CD8-positive, alpha-beta memory T cell (primary cell): ENCODE measurements at regions of chr19 and their contacts with region 1.

Region 1: DNA sequence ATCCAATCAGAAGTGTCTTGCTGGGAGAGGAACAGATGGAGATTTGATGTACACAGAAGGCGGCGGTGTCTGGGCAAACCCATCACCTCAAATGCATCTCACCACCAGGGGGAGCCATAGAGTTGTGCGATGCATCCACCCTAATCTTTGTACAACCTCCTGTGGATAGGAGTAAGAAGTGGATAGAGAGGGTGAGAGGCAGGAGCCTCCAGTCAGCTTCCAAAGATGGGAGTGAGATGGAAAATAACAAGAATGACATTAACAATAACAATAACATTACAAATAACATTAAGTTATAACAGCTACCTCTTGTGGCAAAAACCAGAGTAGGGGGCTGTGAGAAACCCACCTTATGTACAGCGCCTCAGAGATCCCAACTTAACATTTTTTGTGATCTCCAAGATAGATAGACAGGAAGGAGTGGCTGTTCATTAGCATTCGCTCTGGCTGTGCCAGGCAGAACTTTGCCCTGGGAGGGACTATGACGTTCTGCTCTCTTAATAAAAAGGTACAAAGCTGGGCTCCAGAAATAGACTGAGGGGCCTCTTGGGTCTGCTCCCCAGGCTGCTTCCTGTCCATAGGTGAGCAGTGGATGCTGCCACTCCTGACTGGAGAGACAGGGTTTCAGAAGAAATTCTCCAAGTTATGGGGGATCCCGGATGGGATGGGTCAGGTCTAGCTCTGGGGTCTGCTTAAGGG is 5.2 kb upstream of the CEACAM18 start:
- DNase-seq: peak; percentile 44 to 82 (median 67)
- H3K4me3 ChIP-seq: no peak overlapping the region
- H3K4me3 Mint-ChIP-seq: no peak overlapping the region
- H3K27ac ChIP-seq: no peak overlapping the region
- H3K27ac Mint-ChIP-seq: no peak overlapping the region
- H3K4me1 ChIP-seq: no peaks in the 10 kb centered on the region
- H3K4me1 Mint-ChIP-seq: no peaks in the 10 kb centered on the region
- H3K27me3 ChIP-seq: no peaks in the 10 kb centered on the region
- H3K27me3 Mint-ChIP-seq: peaks cover 11 to 41% of the 10 kb centered on the region in 2 donors

Region 2: GRCh38 chr19:51434456-51434855 is 38.7 kb before region 1 on chr19:
- CTCF ChIA-PET with region 1: interaction called, 12 read pairs
- POLR2A ChIA-PET with region 1: no interaction called
- DNase-seq: no peak
- H3K4me3 ChIP-seq: no peak overlapping the region
- H3K4me3 Mint-ChIP-seq: no peak overlapping the region
- H3K27ac ChIP-seq: no peak overlapping the region
- H3K27ac Mint-ChIP-seq: no peak overlapping the region
- H3K4me1 ChIP-seq: no peaks in the 10 kb centered on the region
- H3K4me1 Mint-ChIP-seq: peaks cover 0 to 12% (median 3%) of the 10 kb centered on the region in 3 donors
- H3K27me3 ChIP-seq: peaks cover 3% of the 10 kb centered on the region
- H3K27me3 Mint-ChIP-seq: peaks cover 5 to 24% of the 10 kb centered on the region in 2 donors

Region 3: GRCh38 chr19:51660975-51661600 is 187.9 kb after region 1 on chr19:
- CTCF ChIA-PET with region 1: interaction called, 21 read pairs
- POLR2A ChIA-PET with region 1: no interaction called
- DNase-seq: peak in 3 of 5 donors; percentile 3 to 54 (median 24)
- H3K4me3 ChIP-seq: no peak overlapping the region
- H3K4me3 Mint-ChIP-seq: no peak overlapping the region
- H3K27ac ChIP-seq: no peak overlapping the region
- H3K27ac Mint-ChIP-seq: no peak overlapping the region
- H3K4me1 ChIP-seq: no peaks in the 10 kb centered on the region
- H3K4me1 Mint-ChIP-seq: peaks cover 5 to 6% (median 5%) of the 10 kb centered on the region in 3 donors
- H3K27me3 ChIP-seq: no peaks in the 10 kb centered on the region
- H3K27me3 Mint-ChIP-seq: peaks cover 24 to 42% of the 10 kb centered on the region in 2 donors